ENCODE measurements at regions of chr14 and their contacts with region 1.

Region 1: GRCh38 chr14:57317316-57317715 is 48.5 kb downstream of the AP5M1 start:
- DNase-seq: peak; percentile 82
- H3K4me3 ChIP-seq: no peak overlapping the region
- H3K27ac ChIP-seq: no peak overlapping the region
- H3K4me1 ChIP-seq: no peaks in the 10 kb centered on the region
- H3K27me3 ChIP-seq: peaks cover 11 to 12% of the 10 kb centered on the region in 2 experiments
- CTCF ChIP-seq: peak; percentile 70 to 83
- POLR2A ChIP-seq: no peak

Region 2: GRCh38 chr14:56659964-56660551 is 657.3 kb before region 1 on chr14:
- CTCF ChIA-PET with region 1: interaction called, 26 read pairs
- POLR2A ChIA-PET with region 1: no interaction called
- dilution Hi-C with region 1: no loop called
- intact Hi-C with region 1: loop called (anchors 1 kb)
- DNase-seq: peak; percentile 61
- H3K4me3 ChIP-seq: no peak overlapping the region
- H3K27ac ChIP-seq: no peak overlapping the region
- H3K4me1 ChIP-seq: no peaks in the 10 kb centered on the region
- H3K27me3 ChIP-seq: no peaks in the 10 kb centered on the region
- CTCF ChIP-seq: peak; percentile 50 to 64
- POLR2A ChIP-seq: no peak

Region 3: DNA sequence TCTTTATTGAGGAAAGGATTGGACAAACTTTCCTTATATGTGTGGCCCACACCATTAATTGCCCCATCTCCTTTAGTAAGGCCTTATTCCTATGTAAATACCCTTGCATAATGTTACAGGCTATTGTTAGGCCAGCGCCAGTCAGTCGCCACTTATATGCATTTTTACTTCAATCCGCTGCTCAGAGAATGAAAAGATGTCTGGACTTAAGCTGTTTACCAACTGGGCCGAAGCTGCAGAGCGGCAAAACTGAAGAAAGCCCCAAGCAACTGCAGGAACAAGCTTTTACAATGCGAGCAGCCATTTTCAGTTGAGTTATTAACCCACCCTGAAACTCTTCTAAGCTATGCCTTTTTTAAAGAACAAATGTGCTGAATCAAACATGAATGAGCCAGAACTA is 414.9 kb before region 1 on chr14:
- CTCF ChIA-PET with region 1: no interaction called
- POLR2A ChIA-PET with region 1: no interaction called
- dilution Hi-C with region 1: no loop called
- intact Hi-C with region 1: no loop called
- DNase-seq: no peak
- H3K4me3 ChIP-seq: no peak overlapping the region
- H3K27ac ChIP-seq: no peak overlapping the region
- H3K4me1 ChIP-seq: no peaks in the 10 kb centered on the region
- H3K27me3 ChIP-seq: peaks cover 0 to 7% of the 10 kb centered on the region in 2 experiments
- CTCF ChIP-seq: no peak
- POLR2A ChIP-seq: no peak

Region 4: DNA sequence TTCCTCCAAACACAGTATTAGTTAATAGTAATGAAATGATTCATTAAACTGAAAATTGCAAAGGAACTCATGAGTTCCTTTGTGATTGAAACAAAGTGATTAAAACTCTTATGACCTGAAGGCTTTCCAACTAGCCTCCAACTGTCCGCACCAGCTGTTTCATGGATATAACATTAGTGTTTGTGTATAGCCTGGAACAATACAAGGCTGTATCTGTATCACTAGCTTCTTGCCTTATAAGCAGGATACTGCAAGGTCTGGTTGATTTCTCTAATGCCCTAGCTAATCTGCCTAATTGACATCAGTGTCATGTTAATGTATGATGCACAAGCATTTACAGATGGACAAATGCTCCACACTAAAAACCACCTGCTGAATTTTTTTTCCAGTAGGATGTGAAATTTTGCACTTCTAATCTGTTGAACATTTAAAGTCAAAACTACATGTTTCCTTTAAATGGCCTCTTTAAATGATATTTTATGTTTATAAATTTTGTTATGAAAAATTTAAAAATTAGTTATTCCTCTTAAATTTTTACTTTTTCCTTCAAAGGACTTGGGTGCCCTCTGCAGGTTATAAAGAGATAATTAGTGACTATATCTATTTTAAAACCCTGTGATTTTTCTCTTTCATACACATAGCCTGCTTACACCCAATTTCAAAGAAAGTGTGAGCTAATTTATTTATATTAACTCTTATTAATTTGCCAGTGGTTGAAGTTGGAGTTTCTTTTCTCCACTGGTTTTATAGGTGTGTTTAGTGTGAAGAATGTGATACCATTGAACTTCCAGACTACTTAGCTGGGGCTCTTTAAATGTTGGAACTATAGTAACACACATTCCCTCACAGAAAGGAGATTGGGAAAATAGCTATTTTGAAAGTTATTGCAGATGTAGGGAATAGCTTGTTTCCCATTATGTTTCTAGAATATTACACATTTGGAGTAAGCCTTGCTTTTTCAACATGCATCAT is 23.2 kb before region 1 on chr14:
- CTCF ChIA-PET with region 1: interaction called, 14 read pairs
- POLR2A ChIA-PET with region 1: no interaction called
- dilution Hi-C with region 1: no loop called
- intact Hi-C with region 1: no loop called
- DNase-seq: peak; percentile 34
- H3K4me3 ChIP-seq: no peak overlapping the region
- H3K27ac ChIP-seq: no peak overlapping the region
- H3K4me1 ChIP-seq: no peaks in the 10 kb centered on the region
- H3K27me3 ChIP-seq: no peaks in the 10 kb centered on the region
- CTCF ChIP-seq: no peak
- POLR2A ChIP-seq: no peak

Region 5: GRCh38 chr14:57382283-57382682 is 65.0 kb after region 1 on chr14:
- CTCF ChIA-PET with region 1: interaction called, 23 read pairs
- POLR2A ChIA-PET with region 1: no interaction called
- dilution Hi-C with region 1: no loop called
- intact Hi-C with region 1: loop called (anchors 1 kb)
- DNase-seq: peak; percentile 81
- H3K4me3 ChIP-seq: no peak overlapping the region
- H3K27ac ChIP-seq: peak overlapping the region; percentile 76
- H3K4me1 ChIP-seq: peaks cover 18% of the 10 kb centered on the region
- H3K27me3 ChIP-seq: no peaks in the 10 kb centered on the region
- CTCF ChIP-seq: no peak
- POLR2A ChIP-seq: peak; percentile 32

Region 6: DNA sequence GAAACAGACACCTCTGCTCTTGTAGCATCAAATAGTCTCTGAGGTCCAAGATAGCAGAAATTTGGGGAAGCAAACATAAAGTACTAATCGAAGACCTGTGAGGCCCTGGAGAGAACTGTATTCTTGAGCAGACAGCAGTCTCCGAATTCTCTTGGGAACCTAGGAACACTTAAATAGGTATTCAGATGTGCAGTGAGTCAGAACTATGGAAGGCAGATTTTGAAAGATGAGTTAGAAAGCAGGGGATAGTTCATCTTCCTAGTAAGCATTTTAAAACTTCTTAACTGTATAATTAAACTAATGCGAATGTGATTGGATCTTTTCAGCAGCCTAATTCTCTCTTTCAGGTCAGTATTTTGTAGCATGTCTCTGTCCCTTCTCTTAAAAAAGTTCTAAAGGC is 103.7 kb after region 1 on chr14:
- CTCF ChIA-PET with region 1: no interaction called
- POLR2A ChIA-PET with region 1: no interaction called
- dilution Hi-C with region 1: no loop called
- intact Hi-C with region 1: no loop called
- DNase-seq: no peak
- H3K4me3 ChIP-seq: no peak overlapping the region
- H3K27ac ChIP-seq: no peak overlapping the region
- H3K4me1 ChIP-seq: no peaks in the 10 kb centered on the region
- H3K27me3 ChIP-seq: peaks cover 3 to 4% of the 10 kb centered on the region in 2 experiments
- CTCF ChIP-seq: no peak
- POLR2A ChIP-seq: no peak

Measured in endothelial cell of umbilical vein (primary cell).